PC-3 (cell line): ENCODE measurements at regions of chr20 and their contacts with region 1.

Region 1: DNA sequence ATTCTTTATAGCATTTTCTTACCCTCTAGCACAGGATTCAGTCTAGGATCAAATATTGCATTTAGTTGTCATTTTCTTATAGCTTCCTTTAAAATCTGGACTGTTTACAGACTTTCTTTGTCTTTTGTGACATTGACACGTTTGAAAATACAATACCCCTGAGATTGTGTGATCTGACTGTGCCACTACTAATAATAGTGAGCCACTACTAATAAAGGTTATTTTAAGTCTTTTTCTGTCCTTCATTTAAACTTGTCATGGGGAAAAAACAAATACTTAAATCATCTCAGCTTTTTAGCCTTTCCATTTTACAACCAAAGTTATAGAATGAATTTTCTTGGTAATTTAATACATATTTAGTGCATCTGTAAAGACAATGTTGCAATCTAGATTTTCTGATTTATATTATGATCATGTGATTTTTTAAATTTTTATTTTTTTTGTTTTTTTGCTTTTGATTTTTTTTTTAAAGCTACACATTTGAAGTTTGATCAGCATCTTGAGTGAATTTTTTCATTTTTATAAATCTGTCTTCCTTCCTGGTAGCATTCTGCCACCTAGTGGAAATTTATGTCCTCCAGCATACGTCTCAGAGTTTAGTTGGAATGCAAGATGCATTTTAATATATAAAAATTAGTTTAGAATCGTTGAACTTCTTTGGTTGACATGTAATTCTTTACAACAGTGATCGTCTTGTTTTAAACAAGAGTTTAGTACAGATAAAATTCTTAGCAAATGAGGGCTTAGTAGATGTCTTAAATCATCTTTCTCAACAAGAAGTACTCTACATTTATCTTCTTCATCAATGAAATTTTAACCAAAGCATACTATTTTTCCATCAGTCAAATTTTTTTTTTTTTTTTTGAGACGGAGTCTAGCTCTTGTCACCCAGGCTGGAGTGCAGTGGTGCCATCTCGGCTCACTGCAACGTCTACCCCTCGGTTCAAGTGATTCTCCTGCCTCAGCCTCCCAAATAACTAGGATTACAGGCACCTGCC is 119.4 kb downstream of the NCOA3 start:
- DNase-seq: peak; percentile 86
- ATAC-seq: 0 out of 2 replicates have a peak, but pooled peaks have one; percentile 38
- H3K4me3 ChIP-seq: no peak overlapping the region
- H3K27ac ChIP-seq: no peak overlapping the region
- H3K4me1 ChIP-seq: peaks cover 5% of the 10 kb centered on the region; the same call in 1 of the 2 replicates
- H3K27me3 ChIP-seq: no peaks in the 10 kb centered on the region
- CTCF ChIP-seq: peak; percentile 92

Region 2: DNA sequence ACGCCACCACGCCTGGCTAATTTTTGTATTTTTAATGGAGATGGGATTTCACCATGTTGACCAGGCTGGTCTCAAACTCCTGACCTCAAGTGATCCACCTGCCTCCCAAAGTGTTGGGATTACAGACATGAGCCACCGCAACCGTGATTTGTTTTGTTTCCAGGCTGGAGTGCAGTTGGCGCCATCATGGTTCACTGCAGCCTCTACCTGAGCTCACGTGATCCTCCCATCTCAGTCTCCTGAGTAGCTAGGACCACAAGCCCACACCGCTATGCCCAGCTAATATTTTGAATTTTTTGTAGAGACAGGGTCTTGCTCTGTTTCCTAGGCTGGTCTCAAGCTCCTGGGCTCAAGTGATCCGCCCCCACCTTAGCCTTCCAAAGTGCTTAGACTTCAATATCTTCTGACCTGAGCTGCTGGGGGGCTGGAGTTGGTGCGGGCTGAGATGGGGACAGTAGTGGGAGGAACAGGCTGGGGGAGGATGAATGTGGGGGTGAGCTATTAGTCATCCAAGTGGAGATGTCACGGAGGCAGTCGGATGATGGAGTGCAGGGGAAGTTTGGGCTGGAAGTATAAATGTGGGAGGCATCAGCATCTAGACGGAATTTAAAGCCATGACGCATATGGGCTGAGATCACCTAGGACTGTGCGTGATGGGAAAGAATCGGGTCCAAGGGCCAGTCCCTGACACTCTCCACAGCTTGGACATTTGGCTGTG is 241.5 kb before region 1 on chr20:
- CTCF ChIA-PET with region 1: interaction called, 18 read pairs
- POLR2A ChIA-PET with region 1: interaction called, 6 read pairs
- intact Hi-C with region 1: loop called (anchors 2 kb)
- DNase-seq: no peak
- ATAC-seq: no peak
- H3K4me3 ChIP-seq: no peak overlapping the region
- H3K27ac ChIP-seq: no peak overlapping the region
- H3K4me1 ChIP-seq: peaks cover 12% of the 10 kb centered on the region
- H3K27me3 ChIP-seq: no peaks in the 10 kb centered on the region
- CTCF ChIP-seq: no peak

Region 3: GRCh38 chr20:47464380-47465101 is 156.6 kb before region 1 on chr20:
- CTCF ChIA-PET with region 1: no interaction called
- POLR2A ChIA-PET with region 1: no interaction called
- intact Hi-C with region 1: loop called (anchors 1 kb)
- DNase-seq: peak; percentile 100
- ATAC-seq: peak; percentile 98
- H3K4me3 ChIP-seq: no peak overlapping the region; the same call in 1 of the 2 replicates
- H3K27ac ChIP-seq: peak overlapping the region; percentile 78
- H3K4me1 ChIP-seq: peaks cover 22% of the 10 kb centered on the region
- H3K27me3 ChIP-seq: no peaks in the 10 kb centered on the region
- CTCF ChIP-seq: peak; percentile 71

Region 4: GRCh38 chr20:47501483-47502270 is 119.4 kb before region 1 on chr20 and contains the start of gene NCOA3:
- CTCF ChIA-PET with region 1: interaction called, 8 read pairs
- POLR2A ChIA-PET with region 1: no interaction called
- intact Hi-C with region 1: loop called (anchors 1 kb)
- DNase-seq: peak; percentile 97
- ATAC-seq: peak; percentile 94
- H3K4me3 ChIP-seq: peak within 1 kb of the TSS; percentile 72
- H3K27ac ChIP-seq: peak within 1 kb of the TSS; percentile 65
- H3K4me1 ChIP-seq: peaks cover 41% of the 10 kb centered on the region
- H3K27me3 ChIP-seq: no peaks in the 10 kb centered on the region
- CTCF ChIP-seq: peak; percentile 32
- total RNA-seq, gene NCOA3: 27.8 and 31.1 TPM in 2 replicates

Region 5: DNA sequence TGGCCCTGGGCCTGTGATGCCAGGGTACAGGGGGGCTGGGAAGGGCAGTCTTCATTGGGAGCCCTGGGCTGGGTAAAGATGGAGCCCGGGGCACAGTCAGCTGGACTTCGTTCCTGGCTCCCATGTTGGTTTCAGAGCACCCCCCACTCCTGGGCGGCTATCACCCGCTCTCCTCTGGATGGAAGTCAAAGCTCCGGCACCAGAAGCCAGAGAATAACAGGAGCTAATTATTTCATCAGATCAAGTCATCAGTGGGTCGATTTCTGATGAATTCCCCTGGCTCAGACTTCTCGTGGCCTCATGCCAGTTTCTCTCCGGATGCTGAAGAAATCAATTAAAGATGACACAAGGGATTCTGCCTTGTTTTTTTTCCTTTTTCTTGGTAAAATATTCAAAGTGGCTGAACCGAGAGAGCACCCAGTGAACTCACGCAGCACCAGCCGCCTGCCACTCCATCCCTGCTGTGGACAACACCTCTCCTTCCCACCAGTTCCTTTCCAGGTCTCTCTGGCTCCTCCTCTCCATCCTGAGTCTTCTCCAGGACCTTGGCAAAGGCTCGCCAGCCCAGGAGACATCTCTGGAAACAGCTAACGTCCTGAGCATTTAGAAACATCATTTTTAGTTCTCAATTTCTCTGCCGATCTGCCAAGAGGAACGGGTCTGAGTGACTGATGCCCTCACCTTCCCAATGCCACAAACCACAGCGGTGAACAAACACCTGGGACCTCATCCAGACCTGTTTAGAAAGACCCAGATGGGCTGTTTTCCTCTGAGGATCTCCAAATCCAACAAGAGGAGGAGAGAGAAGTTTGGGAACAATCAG is 141.8 kb after region 1 on chr20:
- CTCF ChIA-PET with region 1: no interaction called
- POLR2A ChIA-PET with region 1: no interaction called
- intact Hi-C with region 1: no loop called
- DNase-seq: no peak
- ATAC-seq: no peak
- H3K4me3 ChIP-seq: no peak overlapping the region
- H3K27ac ChIP-seq: no peak overlapping the region
- H3K4me1 ChIP-seq: no peaks in the 10 kb centered on the region
- H3K27me3 ChIP-seq: no peaks in the 10 kb centered on the region
- CTCF ChIP-seq: no peak

Region 6: GRCh38 chr20:47905612-47906347 is 284.7 kb after region 1 on chr20:
- CTCF ChIA-PET with region 1: no interaction called
- POLR2A ChIA-PET with region 1: no interaction called
- intact Hi-C with region 1: no loop called
- DNase-seq: no peak
- ATAC-seq: no peak
- H3K4me3 ChIP-seq: no peak overlapping the region
- H3K27ac ChIP-seq: no peak overlapping the region
- H3K4me1 ChIP-seq: peaks cover 18% of the 10 kb centered on the region
- H3K27me3 ChIP-seq: no peaks in the 10 kb centered on the region
- CTCF ChIP-seq: no peak